Ascending aorta (tissue), 2 donors: ENCODE measurements at regions of chr5 and their contacts with region 1.

Region 1: DNA sequence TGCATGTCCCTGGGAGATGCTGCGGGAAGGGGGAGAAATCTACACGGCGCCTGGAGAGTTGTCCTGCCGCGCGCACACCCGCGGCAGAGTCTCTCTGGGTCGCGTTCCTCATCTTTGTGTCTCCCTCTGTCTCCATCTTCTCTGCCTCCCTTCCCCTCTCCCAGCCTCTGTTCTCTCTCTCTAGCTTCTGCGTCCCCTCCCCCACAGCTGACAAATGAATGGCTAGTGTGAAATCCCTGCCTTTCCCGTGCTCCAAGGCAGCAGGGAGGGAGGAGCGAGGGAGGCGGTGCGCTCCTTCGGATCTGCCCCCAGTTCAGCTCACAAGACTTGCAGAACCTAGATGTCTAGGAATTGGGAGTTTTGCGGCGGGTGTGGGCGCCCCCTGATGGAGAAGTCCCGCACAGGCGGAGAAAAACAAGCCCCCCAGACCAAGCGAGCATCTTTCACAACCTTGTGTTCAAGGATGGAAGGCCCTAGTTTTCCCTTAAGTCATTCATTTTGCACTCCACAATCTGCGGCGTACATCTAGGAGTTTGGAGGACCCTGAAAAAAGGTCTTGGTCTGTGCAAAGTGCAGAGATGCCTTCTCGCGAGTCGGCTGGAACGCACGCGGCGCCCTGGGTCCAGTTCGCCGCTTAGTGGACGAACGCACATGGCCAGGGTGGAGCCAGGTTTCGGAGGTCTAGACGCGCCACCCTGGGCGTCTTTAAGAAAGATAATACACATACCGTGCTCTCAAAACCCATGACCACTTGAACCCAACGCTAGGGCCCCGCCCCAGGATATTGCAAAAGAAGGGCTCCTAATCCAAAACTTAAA is 2.0 kb downstream of the VCAN start:
- DNase-seq: peak; percentile 93 to 99
- H3K4me3 ChIP-seq: peak overlapping the region; percentile 70 to 78
- H3K27ac ChIP-seq: peak overlapping the region; percentile 93
- H3K4me1 ChIP-seq: peaks cover 0 to 18% of the 10 kb centered on the region in 2 donors
- H3K27me3 ChIP-seq: no peaks in the 10 kb centered on the region
- CTCF ChIP-seq: peak; percentile 85 to 91 (median 91)

Region 2: GRCh38 chr5:82312373-82312856 is 1161.1 kb before region 1 on chr5:
- intact Hi-C with region 1: loop called (anchors 2 kb)
- DNase-seq: peak; percentile 24 to 87
- H3K4me3 ChIP-seq: peak overlapping the region; percentile 10 to 30
- H3K27ac ChIP-seq: peak overlapping the region; percentile 61 to 80
- H3K4me1 ChIP-seq: peaks cover 4 to 9% of the 10 kb centered on the region in 2 donors
- H3K27me3 ChIP-seq: no peaks in the 10 kb centered on the region
- CTCF ChIP-seq: peak; percentile 85 to 91 (median 89)

Region 3: DNA sequence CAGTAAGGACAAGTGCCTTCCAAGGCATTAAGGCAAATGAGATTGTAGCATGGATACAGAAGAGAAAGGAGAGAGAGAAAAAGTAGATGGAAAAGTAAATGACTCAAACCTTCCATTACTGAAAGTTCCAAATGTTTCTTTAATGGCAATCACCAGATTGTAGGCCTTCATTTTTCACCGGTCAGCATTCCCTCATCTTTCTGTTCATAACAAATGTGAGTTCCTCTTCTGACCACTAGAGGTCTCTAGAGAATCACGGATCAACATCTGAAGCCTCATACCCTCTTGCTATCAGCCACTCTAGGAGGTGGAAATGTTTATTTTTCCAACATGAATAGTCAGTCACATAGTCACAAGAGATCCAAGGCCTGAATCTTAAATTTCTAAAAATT is 1121.8 kb before region 1 on chr5:
- intact Hi-C with region 1: loop called (anchors 2 kb)
- DNase-seq: no peak
- H3K4me3 ChIP-seq: no peak overlapping the region
- H3K27ac ChIP-seq: peak overlapping the region; percentile 68 to 89
- H3K4me1 ChIP-seq: peaks cover 12 to 57% of the 10 kb centered on the region in 2 donors
- H3K27me3 ChIP-seq: no peaks in the 10 kb centered on the region
- CTCF ChIP-seq: peak; percentile 66 to 78 (median 66)

Region 4: GRCh38 chr5:82641331-82642003 is 832.1 kb before region 1 on chr5:
- intact Hi-C with region 1: loop called (anchors 1 kb)
- DNase-seq: peak in 1 of 2 donors; percentile 88
- H3K4me3 ChIP-seq: no peak overlapping the region
- H3K27ac ChIP-seq: peak overlapping the region; percentile 61 to 77
- H3K4me1 ChIP-seq: peaks cover 5 to 19% of the 10 kb centered on the region in 2 donors
- H3K27me3 ChIP-seq: no peaks in the 10 kb centered on the region
- CTCF ChIP-seq: peak; percentile 62 to 80 (median 70)

Region 5: GRCh38 chr5:83306572-83307241 is 166.8 kb before region 1 on chr5:
- intact Hi-C with region 1: loop called (anchors 5 kb)
- DNase-seq: peak; percentile 51 to 83
- H3K4me3 ChIP-seq: no peak overlapping the region
- H3K27ac ChIP-seq: peak overlapping the region; percentile 72 to 76
- H3K4me1 ChIP-seq: peaks cover 0 to 8% of the 10 kb centered on the region in 2 donors
- H3K27me3 ChIP-seq: no peaks in the 10 kb centered on the region
- CTCF ChIP-seq: no peak

Region 6: GRCh38 chr5:83517072-83517687 is 43.6 kb after region 1 on chr5:
- intact Hi-C with region 1: no loop called
- DNase-seq: no peak
- H3K4me3 ChIP-seq: no peak overlapping the region
- H3K27ac ChIP-seq: peak overlapping the region in 1 of 2 donors; percentile 48
- H3K4me1 ChIP-seq: peaks cover 3 to 8% of the 10 kb centered on the region in 2 donors
- H3K27me3 ChIP-seq: no peaks in the 10 kb centered on the region
- CTCF ChIP-seq: no peak

Region 7: DNA sequence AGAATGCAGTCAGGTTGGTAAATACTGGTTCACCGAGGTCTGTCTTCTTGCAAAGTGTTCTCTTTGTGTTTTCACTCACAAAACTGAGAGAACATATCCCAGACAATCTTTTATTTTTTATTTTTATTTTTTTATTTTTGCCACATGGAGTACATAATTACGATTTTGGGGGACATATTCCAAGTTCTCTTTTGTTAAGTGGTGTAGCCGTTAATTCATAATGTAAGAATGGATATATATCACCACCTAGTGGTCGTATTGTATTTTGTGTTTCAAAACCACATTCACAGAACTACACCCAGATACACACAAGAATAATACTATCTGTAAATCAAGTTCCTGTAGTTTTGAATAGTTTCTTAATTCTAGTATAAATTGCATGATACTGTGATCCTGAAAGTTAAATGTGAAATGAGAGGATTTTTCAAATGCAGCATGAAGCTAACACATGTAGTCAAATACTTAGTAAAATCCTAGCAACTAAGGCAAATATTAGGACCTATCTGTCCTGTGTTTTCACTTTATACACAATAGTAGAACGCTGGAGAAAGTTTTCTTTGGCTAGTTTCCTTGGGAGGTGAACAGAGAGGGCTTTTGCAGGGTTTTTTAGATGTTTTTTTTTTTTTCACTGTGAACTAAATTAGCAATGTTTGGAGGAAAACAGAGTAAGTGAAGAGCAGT is 90.7 kb after region 1 on chr5:
- intact Hi-C with region 1: loop called (anchors 2 kb)
- DNase-seq: no peak
- H3K4me3 ChIP-seq: no peak overlapping the region
- H3K27ac ChIP-seq: peak overlapping the region; percentile 19 to 77
- H3K4me1 ChIP-seq: peaks cover 8 to 52% of the 10 kb centered on the region in 2 donors
- H3K27me3 ChIP-seq: no peaks in the 10 kb centered on the region
- CTCF ChIP-seq: peak; percentile 51 to 67 (median 57)